Calu3 (cell line): ENCODE measurements at regions of chr17 and their contacts with region 1.

Region 1: GRCh38 chr17:3835410-3836229 is 10.4 kb downstream of the NCBP3 start:
- DNase-seq: no peak
- H3K4me3 Mint-ChIP-seq: no peak overlapping the region
- H3K27ac Mint-ChIP-seq: no peak overlapping the region
- H3K4me1 Mint-ChIP-seq: peaks cover 12% of the 10 kb centered on the region
- H3K27me3 Mint-ChIP-seq: no peaks in the 10 kb centered on the region
- CTCF ChIP-seq: no peak

Region 2: DNA sequence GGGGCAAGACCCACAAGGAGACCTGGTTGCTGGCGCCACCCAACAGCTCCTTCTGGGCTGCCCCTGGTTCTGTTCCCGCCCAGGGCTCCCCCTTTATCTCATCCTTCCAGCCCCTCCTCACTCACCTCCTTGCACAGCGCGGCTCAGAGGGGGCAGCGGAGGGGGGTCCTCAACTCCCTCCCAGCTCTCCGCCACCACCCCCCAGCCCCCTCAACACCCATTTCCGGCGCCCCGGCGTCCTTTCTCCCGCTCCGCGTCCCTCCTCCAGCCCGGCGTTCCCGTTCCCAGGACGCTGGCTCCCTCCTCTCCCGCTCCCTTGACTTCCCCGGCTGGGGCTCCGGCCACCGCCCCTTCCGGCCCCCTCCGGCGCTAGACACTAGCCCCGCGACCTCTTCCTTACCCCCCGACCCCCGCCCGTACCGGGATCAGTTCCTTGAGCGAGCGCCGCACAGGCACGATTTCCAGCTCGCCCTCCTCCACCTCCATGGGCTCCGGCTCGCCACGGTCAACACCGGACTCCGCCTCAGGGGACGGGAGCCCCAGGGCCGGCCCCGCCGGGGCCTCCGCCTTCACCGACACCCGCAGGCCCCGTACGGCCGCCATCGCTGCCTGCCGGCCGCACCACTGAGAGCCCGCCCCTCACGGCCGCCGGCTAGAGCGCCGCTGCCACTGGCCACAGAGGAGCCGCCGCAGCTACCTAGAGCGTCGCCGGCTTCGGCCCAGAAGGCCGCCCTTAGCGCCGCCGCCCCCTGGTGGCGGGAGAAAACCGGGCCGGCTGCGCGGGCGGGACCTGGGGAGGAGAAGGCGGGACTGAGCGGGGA is 10.2 kb after region 1 on chr17 and contains the start of gene NCBP3:
- CTCF ChIA-PET with region 1: interaction called, 10 read pairs
- intact Hi-C with region 1: no loop called
- DNase-seq: peak; percentile 84
- H3K4me3 Mint-ChIP-seq: peak within 1 kb of the TSS; percentile 78
- H3K27ac Mint-ChIP-seq: peak within 1 kb of the TSS; percentile 27
- H3K4me1 Mint-ChIP-seq: no peaks in the 10 kb centered on the region
- H3K27me3 Mint-ChIP-seq: peaks cover 16% of the 10 kb centered on the region
- CTCF ChIP-seq: peak; percentile 41
- total RNA-seq, gene NCBP3: 25.4 and 26.9 TPM in 2 replicates

Region 3: GRCh38 chr17:3879186-3879585 is 43.6 kb after region 1 on chr17:
- CTCF ChIA-PET with region 1: no interaction called
- intact Hi-C with region 1: no loop called
- DNase-seq: no peak
- H3K4me3 Mint-ChIP-seq: no peak overlapping the region
- H3K27ac Mint-ChIP-seq: no peak overlapping the region
- H3K4me1 Mint-ChIP-seq: no peaks in the 10 kb centered on the region
- H3K27me3 Mint-ChIP-seq: no peaks in the 10 kb centered on the region
- CTCF ChIP-seq: no peak

Region 4: GRCh38 chr17:3990386-3991127 is 154.9 kb after region 1 on chr17:
- CTCF ChIA-PET with region 1: no interaction called
- intact Hi-C with region 1: no loop called
- DNase-seq: no peak
- H3K4me3 Mint-ChIP-seq: peak overlapping the region; percentile 52
- H3K27ac Mint-ChIP-seq: peak overlapping the region; percentile 51
- H3K4me1 Mint-ChIP-seq: peaks cover 10% of the 10 kb centered on the region
- H3K27me3 Mint-ChIP-seq: peaks cover 27% of the 10 kb centered on the region
- CTCF ChIP-seq: no peak